CD8-positive, alpha-beta T cell (primary cell): ENCODE measurements at regions of chr16 and their contacts with region 1.

Region 1: GRCh38 chr16:57045694-57046381 is 46.5 kb upstream of the CPNE2 start:
- DNase-seq: peak in 8 of 9 experiments; percentile 27 to 76 (median 58)
- ATAC-seq: peak; percentile 5
- H3K4me3 ChIP-seq: no peak overlapping the region
- H3K4me3 Mint-ChIP-seq: peak overlapping the region; percentile 50
- H3K27ac ChIP-seq: peak overlapping the region; percentile 2 to 59
- H3K27ac Mint-ChIP-seq: peak overlapping the region; percentile 93
- H3K4me1 ChIP-seq: peaks cover 52% of the 10 kb centered on the region
- H3K4me1 Mint-ChIP-seq: peaks cover 54% of the 10 kb centered on the region
- H3K27me3 ChIP-seq: no peaks in the 10 kb centered on the region
- H3K27me3 Mint-ChIP-seq: no peaks in the 10 kb centered on the region
- CTCF ChIP-seq: peak; percentile 38

Region 2: GRCh38 chr16:56970934-56971767 is 74.7 kb before region 1 on chr16:
- CTCF ChIA-PET with region 1: interaction called, 96 read pairs
- POLR2A ChIA-PET with region 1: interaction called, 9 read pairs
- intact Hi-C with region 1: no loop called
- DNase-seq: peak in 2 of 9 experiments; percentile 28 to 39
- ATAC-seq: peak; percentile 48
- H3K4me3 ChIP-seq: no peak overlapping the region
- H3K4me3 Mint-ChIP-seq: no peak overlapping the region
- H3K27ac ChIP-seq: no peak overlapping the region
- H3K27ac Mint-ChIP-seq: peak overlapping the region; percentile 63
- H3K4me1 ChIP-seq: peaks cover 53% of the 10 kb centered on the region
- H3K4me1 Mint-ChIP-seq: peaks cover 46% of the 10 kb centered on the region
- H3K27me3 ChIP-seq: no peaks in the 10 kb centered on the region
- H3K27me3 Mint-ChIP-seq: no peaks in the 10 kb centered on the region
- CTCF ChIP-seq: no peak

Region 3: GRCh38 chr16:56994311-56994710 is 51.5 kb before region 1 on chr16:
- CTCF ChIA-PET with region 1: interaction called, 25 read pairs
- POLR2A ChIA-PET with region 1: interaction called, 34 read pairs
- intact Hi-C with region 1: loop called (anchors 1 kb)
- DNase-seq: peak in 3 of 9 experiments; percentile 21 to 58 (median 45)
- ATAC-seq: peak; percentile 16
- H3K4me3 ChIP-seq: peak overlapping the region; percentile 36 to 40
- H3K4me3 Mint-ChIP-seq: peak overlapping the region; percentile 100
- H3K27ac ChIP-seq: peak overlapping the region; percentile 38 to 90
- H3K27ac Mint-ChIP-seq: peak overlapping the region; percentile 99
- H3K4me1 ChIP-seq: peaks cover 73% of the 10 kb centered on the region
- H3K4me1 Mint-ChIP-seq: peaks cover 78% of the 10 kb centered on the region
- H3K27me3 ChIP-seq: no peaks in the 10 kb centered on the region
- H3K27me3 Mint-ChIP-seq: no peaks in the 10 kb centered on the region
- CTCF ChIP-seq: no peak

Region 4: DNA sequence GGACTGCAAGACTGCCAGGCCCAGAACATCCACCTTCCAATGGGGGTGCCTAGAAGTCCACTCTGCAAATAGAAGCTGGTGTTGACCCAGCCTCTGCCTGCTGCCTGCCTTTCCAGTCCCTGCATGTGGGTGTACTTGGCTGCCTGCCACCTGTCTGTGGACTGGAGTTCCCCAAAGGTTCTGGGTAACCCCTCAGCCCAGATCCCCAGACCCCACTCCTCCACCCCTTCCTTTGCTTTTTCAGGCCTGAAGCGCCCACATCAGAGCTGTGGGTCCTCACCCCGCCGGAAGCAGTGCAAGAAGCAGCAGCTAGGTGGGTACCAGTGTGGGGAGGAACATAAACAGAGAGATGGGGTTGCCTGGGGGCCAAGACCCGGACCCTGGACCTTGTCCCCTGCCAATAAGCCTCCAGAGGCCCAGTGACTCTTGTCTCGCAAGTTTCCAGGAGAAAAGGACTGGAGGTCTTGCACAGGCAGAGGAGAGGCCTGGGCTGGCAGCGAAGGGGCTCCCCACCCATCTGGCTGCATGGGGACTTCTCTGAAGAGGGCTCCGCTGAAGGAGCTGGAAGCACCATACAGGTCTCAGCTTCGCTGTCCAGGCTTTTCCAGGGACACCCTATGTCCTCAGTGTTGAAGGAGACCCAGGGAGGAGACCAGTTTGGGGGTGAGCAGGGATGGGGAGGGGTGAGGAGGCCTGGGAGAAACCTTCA is 22.1 kb before region 1 on chr16:
- CTCF ChIA-PET with region 1: interaction called, 64 read pairs
- POLR2A ChIA-PET with region 1: interaction called, 86 read pairs
- intact Hi-C with region 1: loop called in 1 of 2 experiments (anchors 1 kb)
- DNase-seq: peak; percentile 54 to 95 (median 84)
- ATAC-seq: peak; percentile 86
- H3K4me3 ChIP-seq: peak overlapping the region in 1 of 2 experiments; percentile 34
- H3K4me3 Mint-ChIP-seq: peak overlapping the region; percentile 67
- H3K27ac ChIP-seq: peak overlapping the region in 1 of 2 experiments; percentile 60
- H3K27ac Mint-ChIP-seq: peak overlapping the region; percentile 89
- H3K4me1 ChIP-seq: peaks cover 93% of the 10 kb centered on the region
- H3K4me1 Mint-ChIP-seq: peaks cover 93% of the 10 kb centered on the region
- H3K27me3 ChIP-seq: no peaks in the 10 kb centered on the region
- H3K27me3 Mint-ChIP-seq: no peaks in the 10 kb centered on the region
- CTCF ChIP-seq: no peak

Region 5: GRCh38 chr16:57029161-57030160 is 16.4 kb before region 1 on chr16:
- CTCF ChIA-PET with region 1: interaction called, 64 read pairs
- POLR2A ChIA-PET with region 1: interaction called, 86 read pairs
- intact Hi-C with region 1: no loop called
- DNase-seq: peak in 4 of 9 experiments; percentile 30 to 83 (median 72)
- ATAC-seq: peak; percentile 73
- H3K4me3 ChIP-seq: no peak overlapping the region
- H3K4me3 Mint-ChIP-seq: no peak overlapping the region
- H3K27ac ChIP-seq: peak overlapping the region in 1 of 2 experiments; percentile 50
- H3K27ac Mint-ChIP-seq: peak overlapping the region; percentile 84
- H3K4me1 ChIP-seq: peaks cover 78% of the 10 kb centered on the region
- H3K4me1 Mint-ChIP-seq: peaks cover 90% of the 10 kb centered on the region
- H3K27me3 ChIP-seq: no peaks in the 10 kb centered on the region
- H3K27me3 Mint-ChIP-seq: no peaks in the 10 kb centered on the region
- CTCF ChIP-seq: no peak

Region 6: GRCh38 chr16:57609541-57610401 is 563.9 kb after region 1 on chr16:
- CTCF ChIA-PET with region 1: no interaction called
- POLR2A ChIA-PET with region 1: no interaction called
- intact Hi-C with region 1: no loop called
- DNase-seq: peak in 8 of 9 experiments; percentile 22 to 88 (median 63)
- ATAC-seq: peak; percentile 95
- H3K4me3 ChIP-seq: peak overlapping the region in 1 of 2 experiments; percentile 13
- H3K4me3 Mint-ChIP-seq: peak overlapping the region; percentile 74
- H3K27ac ChIP-seq: peak overlapping the region; percentile 11 to 81
- H3K27ac Mint-ChIP-seq: peak overlapping the region; percentile 84
- H3K4me1 ChIP-seq: peaks cover 15% of the 10 kb centered on the region
- H3K4me1 Mint-ChIP-seq: peaks cover 48% of the 10 kb centered on the region
- H3K27me3 ChIP-seq: no peaks in the 10 kb centered on the region
- H3K27me3 Mint-ChIP-seq: no peaks in the 10 kb centered on the region
- CTCF ChIP-seq: peak; percentile 39